K562 (cell line): ENCODE measurements at regions of chr6 and their contacts with region 1.

Region 1: GRCh38 chr6:2103644-2104523 is 141.5 kb downstream of the GMDS start:
- DNase-seq: peak in 2 of 4 experiments; percentile 17 to 23
- ATAC-seq: peak; percentile 85
- H3K4me3 ChIP-seq: no peak overlapping the region
- H3K27ac ChIP-seq: no peak overlapping the region
- H3K4me1 ChIP-seq: no peaks in the 10 kb centered on the region
- H3K27me3 ChIP-seq: no peaks in the 10 kb centered on the region
- CTCF ChIP-seq: peak; percentile 38 to 75 (median 59); a peak in 5 of 6 replicates
- EP300 ChIP-seq: no peak
- POLR2A ChIP-seq: no peak
- RAD21 ChIP-seq: peak; percentile 86 to 92

Region 2: GRCh38 chr6:1604158-1605030 is 499.5 kb before region 1 on chr6:
- CTCF ChIA-PET with region 1: interaction called, 11 read pairs
- POLR2A ChIA-PET with region 1: no interaction called
- in situ Hi-C with region 1: no loop called
- intact Hi-C with region 1: loop called (anchors 1 kb)
- DNase-seq: peak; percentile 72 to 88 (median 86)
- ATAC-seq: peak; percentile 99
- H3K4me3 ChIP-seq: no peak overlapping the region
- H3K27ac ChIP-seq: no peak overlapping the region
- H3K4me1 ChIP-seq: peaks cover 0 to 18% of the 10 kb centered on the region in 2 experiments; a peak in 1 of 5 replicates
- H3K27me3 ChIP-seq: peaks cover 68 to 82% of the 10 kb centered on the region in 2 experiments
- CTCF ChIP-seq: peak; percentile 75 to 95 (median 88)
- EP300 ChIP-seq: no peak
- POLR2A ChIP-seq: no peak
- RAD21 ChIP-seq: peak; percentile 99

Region 3: DNA sequence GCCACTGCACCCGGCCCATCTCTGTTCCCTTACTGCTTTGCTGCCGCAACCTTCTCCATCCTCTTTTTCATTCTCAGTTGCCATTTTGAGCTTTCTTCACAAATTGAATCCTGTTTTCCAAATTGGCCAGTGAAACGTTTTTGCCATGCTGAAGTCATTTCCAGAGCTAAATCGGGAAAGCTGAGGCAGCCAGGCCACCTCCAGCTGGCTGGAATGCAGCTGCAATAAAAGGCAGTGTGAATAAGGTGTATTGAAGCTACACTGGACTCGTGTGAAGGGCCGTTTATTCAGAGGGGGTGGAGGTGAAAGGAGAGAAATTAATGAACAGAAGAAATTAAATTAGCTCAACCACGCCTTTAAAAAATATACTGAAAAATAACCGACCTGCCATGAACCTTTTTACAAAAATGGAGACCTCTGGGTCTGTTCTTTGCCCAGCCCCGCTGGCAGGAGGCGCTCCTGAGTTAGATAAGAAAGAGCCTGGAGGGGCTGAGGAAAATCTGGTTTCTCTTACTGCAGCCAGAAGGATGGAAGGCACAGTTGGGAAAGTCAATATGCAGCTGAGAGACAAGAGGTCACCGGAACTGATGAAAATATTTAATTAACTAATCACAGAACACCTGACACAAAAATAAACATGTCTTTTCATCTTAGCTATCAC is 210.3 kb before region 1 on chr6:
- CTCF ChIA-PET with region 1: no interaction called
- POLR2A ChIA-PET with region 1: no interaction called
- in situ Hi-C with region 1: no loop called
- intact Hi-C with region 1: loop called (anchors 10 kb)
- DNase-seq: peak in 2 of 4 experiments; percentile 18 to 20
- ATAC-seq: 0 out of 3 replicates have a peak, but pooled peaks have one; percentile 42
- H3K4me3 ChIP-seq: no peak overlapping the region
- H3K27ac ChIP-seq: no peak overlapping the region
- H3K4me1 ChIP-seq: no peaks in the 10 kb centered on the region
- H3K27me3 ChIP-seq: peaks cover 3 to 11% of the 10 kb centered on the region in 2 experiments; a peak in 4 of 5 replicates
- CTCF ChIP-seq: peak; percentile 32 to 52 (median 43); a peak in 2 of 6 replicates
- EP300 ChIP-seq: no peak
- POLR2A ChIP-seq: no peak
- RAD21 ChIP-seq: peak; percentile 61 to 65

Region 4: DNA sequence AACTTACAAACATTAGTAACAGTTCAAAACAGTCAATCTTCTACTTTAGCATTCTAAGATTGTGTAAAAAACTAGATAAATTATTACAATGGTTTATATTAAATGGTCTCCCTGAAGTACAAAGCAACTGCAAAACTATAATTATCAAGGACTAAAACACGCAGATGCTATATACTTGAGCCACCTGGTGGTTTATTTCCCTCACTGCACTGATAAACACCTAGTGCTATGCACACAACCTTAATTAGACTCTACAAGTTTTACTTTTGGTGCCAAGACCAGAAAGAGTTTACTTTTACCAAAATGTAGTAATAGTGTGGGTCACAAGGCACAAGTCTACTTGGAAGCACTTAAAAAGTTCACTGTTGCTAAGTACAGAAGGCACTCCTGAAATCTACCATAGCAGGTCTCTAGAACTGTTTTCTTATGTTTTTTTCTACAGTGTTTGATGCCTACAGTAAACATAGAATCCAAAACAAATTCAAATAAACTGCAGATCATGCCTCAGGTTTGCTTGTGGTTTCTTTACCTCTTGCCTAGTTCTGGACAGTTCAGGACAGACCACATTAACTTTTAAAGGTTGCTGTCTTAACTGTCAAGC is 92.3 kb after region 1 on chr6:
- CTCF ChIA-PET with region 1: no interaction called
- POLR2A ChIA-PET with region 1: no interaction called
- in situ Hi-C with region 1: no loop called
- intact Hi-C with region 1: loop called (anchors 5 kb)
- DNase-seq: peak; percentile 31 to 61 (median 49)
- ATAC-seq: peak; percentile 88
- H3K4me3 ChIP-seq: no peak overlapping the region
- H3K27ac ChIP-seq: no peak overlapping the region
- H3K4me1 ChIP-seq: no peaks in the 10 kb centered on the region; a peak in 1 of 5 replicates
- H3K27me3 ChIP-seq: peaks cover 0 to 14% of the 10 kb centered on the region in 2 experiments; a peak in 1 of 5 replicates
- CTCF ChIP-seq: peak; percentile 52 to 74 (median 71); a peak in 5 of 6 replicates
- EP300 ChIP-seq: no peak
- POLR2A ChIP-seq: no peak
- RAD21 ChIP-seq: peak; percentile 85 to 91

Region 5: GRCh38 chr6:2582269-2582668 is 478.4 kb after region 1 on chr6:
- CTCF ChIA-PET with region 1: no interaction called
- POLR2A ChIA-PET with region 1: no interaction called
- in situ Hi-C with region 1: no loop called
- intact Hi-C with region 1: no loop called
- DNase-seq: no peak
- ATAC-seq: peak; percentile 59; the same call in 2 of the 3 replicates
- H3K4me3 ChIP-seq: no peak overlapping the region
- H3K27ac ChIP-seq: no peak overlapping the region
- H3K4me1 ChIP-seq: no peaks in the 10 kb centered on the region; a peak in 1 of 5 replicates
- H3K27me3 ChIP-seq: peaks cover 11 to 26% of the 10 kb centered on the region in 2 experiments; a peak in 4 of 5 replicates
- CTCF ChIP-seq: peak in 1 of 3 experiments; percentile 9; a peak in 1 of 6 replicates
- EP300 ChIP-seq: no peak
- POLR2A ChIP-seq: no peak
- RAD21 ChIP-seq: no peak; a peak in 1 of 4 replicates